ENCODE measurements at regions of chr6 and their contacts with region 1.

Region 1: DNA sequence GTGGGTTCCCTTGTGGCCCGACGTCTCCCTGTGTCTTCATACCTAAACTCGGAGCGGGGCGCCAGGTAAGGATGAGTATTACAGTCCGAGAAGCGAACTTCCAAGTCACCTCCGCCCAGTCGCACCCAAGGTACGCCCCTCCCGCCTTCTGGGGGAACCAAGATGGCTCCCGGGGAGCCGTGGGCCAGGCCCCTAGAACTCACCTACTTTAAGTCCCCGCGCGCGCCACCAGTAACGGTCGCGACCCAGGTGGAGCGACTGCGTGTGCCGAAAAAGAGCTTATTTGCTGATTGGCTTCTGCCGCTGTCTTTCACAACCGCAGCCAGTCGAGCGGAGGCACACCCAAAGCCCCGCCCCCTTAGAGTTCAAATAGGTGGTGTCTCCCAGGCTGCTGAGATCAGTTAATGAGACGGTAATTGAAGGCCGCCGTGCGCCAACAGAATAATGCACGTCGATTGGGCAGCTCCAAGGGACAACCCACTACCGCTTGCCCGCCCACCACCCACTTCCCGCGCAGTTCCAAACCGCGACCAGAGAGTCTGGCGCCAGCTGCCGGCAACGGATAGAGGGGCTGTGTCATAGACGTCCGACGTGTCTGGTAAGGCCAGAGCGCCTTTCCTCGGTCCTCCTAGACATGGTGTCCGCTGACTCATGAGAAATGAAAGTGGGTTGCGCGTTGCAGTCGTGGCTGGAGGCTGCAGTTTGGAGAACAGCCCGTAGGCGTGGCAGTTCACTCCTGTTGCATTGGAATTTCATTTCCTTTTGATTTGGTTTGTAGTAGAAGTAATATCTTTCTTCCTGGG is at the start of gene MDC1:
- DNase-seq: peak; percentile 100
- ATAC-seq: peak; percentile 88
- total RNA-seq, gene MDC1: 13.1 TPM

Region 2: GRCh38 chr6:30311101-30311500 is 406.1 kb before region 1 on chr6:
- intact Hi-C with region 1: no loop called
- DNase-seq: no peak
- ATAC-seq: no peak

Region 3: DNA sequence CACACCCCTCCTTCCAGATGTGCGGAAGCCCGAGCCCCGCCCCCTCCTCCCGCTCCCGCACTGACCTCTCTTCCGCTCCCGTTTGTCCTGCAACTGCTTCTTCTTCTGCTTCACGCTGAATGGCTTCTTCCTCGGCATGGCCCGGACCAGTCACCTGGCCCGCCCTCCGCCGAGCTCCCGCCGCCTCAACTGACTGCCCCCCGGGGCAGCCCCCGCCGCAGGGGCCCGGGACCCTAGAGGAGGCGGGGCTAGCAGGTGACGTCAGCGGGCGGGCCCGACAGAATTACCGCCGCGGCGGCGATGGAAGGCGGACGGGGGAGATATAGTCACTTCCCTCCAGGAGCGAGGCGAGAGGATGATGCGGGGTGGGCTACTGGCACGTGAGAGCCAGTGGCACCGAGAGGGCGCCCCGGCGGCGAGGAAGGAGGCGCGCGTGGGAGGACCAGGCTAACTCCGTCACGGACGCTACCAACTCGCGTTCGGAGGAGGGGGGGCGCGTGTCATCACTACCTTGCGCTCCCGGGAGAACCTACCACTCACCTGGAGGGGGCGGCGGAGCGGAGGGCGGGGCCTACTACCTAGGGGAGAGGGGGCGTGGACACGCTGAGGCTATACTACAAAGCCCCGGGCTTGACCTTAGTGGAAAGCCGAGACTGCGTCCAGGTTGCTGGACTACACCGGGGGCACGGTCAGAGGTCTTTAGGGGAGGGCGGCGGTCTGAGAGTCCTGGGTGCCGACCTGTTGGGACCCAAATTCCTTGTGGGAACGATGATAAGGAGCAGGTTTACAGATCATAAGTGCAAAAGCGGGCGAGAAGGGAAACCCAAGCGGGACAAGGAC is 161.0 kb before region 1 on chr6 and contains the start of gene GNL1:
- intact Hi-C with region 1: loop called (anchors 5 kb)
- DNase-seq: peak; percentile 96
- ATAC-seq: peak; percentile 79
- total RNA-seq, gene GNL1: 18.3 TPM

Region 4: GRCh38 chr6:30678964-30679726 is 38.1 kb before region 1 on chr6:
- intact Hi-C with region 1: loop called (anchors 1 kb)
- DNase-seq: peak; percentile 96
- ATAC-seq: peak; percentile 82

Region 5: DNA sequence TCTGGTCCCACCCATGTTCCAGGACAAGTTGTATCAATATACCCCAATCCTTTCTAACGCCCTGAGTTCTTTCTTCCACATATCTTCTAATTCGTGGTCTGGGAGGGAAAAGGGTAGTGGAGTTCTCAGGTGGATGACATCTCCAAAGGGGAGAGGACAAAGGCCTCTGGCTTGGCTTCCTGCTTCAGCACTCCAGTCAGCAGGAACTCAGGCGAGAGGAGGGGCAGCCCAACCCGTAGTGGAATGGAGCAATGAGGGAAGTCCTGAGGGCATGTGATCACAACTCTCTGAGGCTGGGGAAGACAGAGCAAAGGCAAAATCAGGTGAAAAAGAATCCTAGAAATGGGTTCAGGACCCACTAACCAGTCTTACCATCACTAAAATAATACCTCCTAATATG is 16.9 kb before region 1 on chr6:
- intact Hi-C with region 1: no loop called
- DNase-seq: no peak
- ATAC-seq: peak; percentile 81

Region 6: GRCh38 chr6:30742316-30743098 is 25.3 kb after region 1 on chr6 and contains the start of gene FLOT1:
- intact Hi-C with region 1: loop called (anchors 2 kb)
- DNase-seq: peak; percentile 99
- ATAC-seq: peak; percentile 96
- total RNA-seq, gene FLOT1: 240 TPM